Colonic mucosa (tissue), 4 donors: ENCODE measurements at regions of chrX and their contacts with region 1.

Region 1: GRCh38 chrX:10199212-10199611 is 42.4 kb downstream of the CLCN4 start:
- DNase-seq: no peak
- H3K4me3 ChIP-seq: no peak overlapping the region
- H3K27ac ChIP-seq: no peak overlapping the region
- H3K4me1 ChIP-seq: no peaks in the 10 kb centered on the region
- H3K27me3 ChIP-seq: no peaks in the 10 kb centered on the region
- CTCF ChIP-seq: no peak

Region 2: DNA sequence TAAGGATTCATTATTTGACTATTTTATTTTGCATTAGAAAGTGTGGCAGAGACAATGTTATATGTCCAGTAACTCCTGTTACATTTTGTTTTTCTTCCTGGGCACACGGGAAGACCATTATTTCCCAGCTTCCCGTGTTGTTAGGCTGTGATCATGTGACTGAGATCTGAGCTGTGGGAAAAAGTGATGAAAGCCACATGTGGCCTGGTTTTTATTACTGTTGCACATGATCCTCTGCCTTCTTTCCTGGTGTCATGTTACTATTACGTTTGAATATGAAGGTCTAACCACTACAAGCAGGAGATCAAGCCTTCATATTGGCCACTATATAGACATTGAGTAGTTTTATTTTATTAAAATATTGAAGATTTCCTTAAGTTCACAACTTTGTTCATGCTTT is 449.4 kb after region 1 on chrX:
- intact Hi-C with region 1: no loop called
- DNase-seq: no peak
- H3K4me3 ChIP-seq: no peak overlapping the region
- H3K27ac ChIP-seq: no peak overlapping the region
- H3K4me1 ChIP-seq: no peaks in the 10 kb centered on the region
- H3K27me3 ChIP-seq: no peaks in the 10 kb centered on the region
- CTCF ChIP-seq: no peak

Region 3: GRCh38 chrX:10722851-10723250 is 523.6 kb after region 1 on chrX:
- intact Hi-C with region 1: loop called (anchors 5 kb)
- DNase-seq: peak; percentile 67
- H3K4me3 ChIP-seq: no peak overlapping the region
- H3K27ac ChIP-seq: no peak overlapping the region
- H3K4me1 ChIP-seq: no peaks in the 10 kb centered on the region
- H3K27me3 ChIP-seq: no peaks in the 10 kb centered on the region
- CTCF ChIP-seq: peak; percentile 69